ENCODE measurements at regions of chr12 and their contacts with region 1.

Region 1: GRCh38 chr12:121793838-121794533 is 498 bp upstream of the RHOF start:
- DNase-seq: peak; percentile 97
- ATAC-seq: peak; percentile 62
- H3K4me3 Mint-ChIP-seq: peak overlapping the region; percentile 93
- H3K27ac Mint-ChIP-seq: peak overlapping the region; percentile 90
- H3K4me1 Mint-ChIP-seq: peaks cover 53% of the 10 kb centered on the region
- H3K27me3 Mint-ChIP-seq: no peaks in the 10 kb centered on the region

Region 2: GRCh38 chr12:121688966-121689365 is 105.0 kb before region 1 on chr12:
- CTCF ChIA-PET with region 1: interaction called, 61 read pairs
- DNase-seq: no peak
- ATAC-seq: no peak
- H3K4me3 Mint-ChIP-seq: no peak overlapping the region
- H3K27ac Mint-ChIP-seq: no peak overlapping the region
- H3K4me1 Mint-ChIP-seq: peaks cover 14% of the 10 kb centered on the region
- H3K27me3 Mint-ChIP-seq: peaks cover 2% of the 10 kb centered on the region

Region 3: GRCh38 chr12:121712461-121713256 is 81.3 kb before region 1 on chr12 and contains the start of gene TMEM120B:
- CTCF ChIA-PET with region 1: interaction called, 74 read pairs
- DNase-seq: peak; percentile 85
- ATAC-seq: peak; percentile 89
- H3K4me3 Mint-ChIP-seq: peak within 1 kb of the TSS; percentile 99
- H3K27ac Mint-ChIP-seq: peak within 1 kb of the TSS; percentile 96
- H3K4me1 Mint-ChIP-seq: peaks cover 26% of the 10 kb centered on the region
- H3K27me3 Mint-ChIP-seq: no peaks in the 10 kb centered on the region
- total RNA-seq, gene TMEM120B: 8.8 to 11.0 TPM

Region 4: DNA sequence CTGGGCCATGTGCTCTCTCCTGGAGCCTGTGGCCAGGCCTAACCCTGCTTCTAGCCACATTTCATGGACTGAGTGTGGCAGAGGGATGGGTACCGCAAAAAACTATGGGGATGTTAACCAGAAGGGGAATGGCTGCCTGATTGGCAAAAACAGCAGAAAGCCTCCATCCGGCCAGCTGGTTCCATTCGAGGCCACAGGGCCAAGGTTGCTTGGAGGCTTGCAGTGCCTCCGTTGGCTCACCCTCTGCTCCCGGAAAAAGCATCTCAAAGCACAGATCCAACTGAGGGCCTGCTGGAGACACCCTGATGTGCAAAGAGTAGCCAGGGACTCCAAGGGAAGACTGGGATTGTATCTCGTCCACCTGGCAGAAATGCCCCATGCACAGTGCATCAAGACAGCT is 65.0 kb before region 1 on chr12:
- CTCF ChIA-PET with region 1: no interaction called
- DNase-seq: no peak
- ATAC-seq: no peak
- H3K4me3 Mint-ChIP-seq: no peak overlapping the region
- H3K27ac Mint-ChIP-seq: no peak overlapping the region
- H3K4me1 Mint-ChIP-seq: no peaks in the 10 kb centered on the region
- H3K27me3 Mint-ChIP-seq: no peaks in the 10 kb centered on the region

Region 5: DNA sequence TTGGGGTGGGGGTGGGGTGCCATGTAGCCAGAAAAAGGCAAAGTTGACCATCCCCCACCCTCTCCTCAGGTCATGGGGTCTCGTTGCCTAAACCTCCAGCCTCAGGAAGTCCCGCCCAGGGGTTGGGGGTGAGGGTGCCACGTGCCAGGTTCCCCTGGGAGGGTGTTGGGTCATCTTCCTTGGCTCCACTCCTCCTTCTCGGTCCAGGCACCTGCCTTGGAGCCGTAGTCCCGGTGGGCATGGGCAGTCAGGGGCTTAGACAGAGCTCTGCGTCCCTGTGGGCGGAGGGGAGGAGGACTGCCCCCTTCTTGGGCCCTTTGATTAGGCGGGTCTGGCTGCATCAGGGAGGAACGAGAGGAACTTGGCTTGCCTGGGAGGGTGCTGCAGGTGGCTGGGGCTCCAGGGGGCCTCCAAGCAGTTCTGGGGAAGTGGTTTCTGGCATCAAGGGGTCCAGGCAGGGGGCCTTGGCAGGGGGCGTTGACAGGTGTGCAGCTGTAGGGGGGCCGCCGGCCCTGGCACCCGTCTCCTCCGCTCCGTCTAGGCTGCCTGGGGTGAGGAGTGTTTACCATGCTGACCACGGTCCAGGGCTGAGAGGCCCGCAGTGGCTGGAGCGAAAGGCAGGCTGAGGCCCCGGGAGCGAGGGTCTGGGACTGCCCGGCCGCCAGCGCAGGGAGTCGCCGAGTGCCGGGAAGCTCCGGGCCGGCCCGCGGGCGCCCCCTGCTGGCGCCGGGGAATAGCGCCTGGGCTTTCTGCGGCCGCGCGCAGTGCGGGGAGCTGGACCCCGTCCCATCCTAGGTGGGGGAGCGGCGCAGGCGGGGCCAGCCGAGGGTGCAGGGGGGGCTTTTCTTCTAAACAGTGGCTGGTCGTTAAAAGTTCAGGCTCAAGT is 17.7 kb after region 1 on chr12:
- CTCF ChIA-PET with region 1: interaction called, 1,678 read pairs
- DNase-seq: peak; percentile 72
- ATAC-seq: peak; percentile 89
- H3K4me3 Mint-ChIP-seq: peak overlapping the region; percentile 78
- H3K27ac Mint-ChIP-seq: peak overlapping the region; percentile 58
- H3K4me1 Mint-ChIP-seq: peaks cover 46% of the 10 kb centered on the region
- H3K27me3 Mint-ChIP-seq: no peaks in the 10 kb centered on the region

Region 6: DNA sequence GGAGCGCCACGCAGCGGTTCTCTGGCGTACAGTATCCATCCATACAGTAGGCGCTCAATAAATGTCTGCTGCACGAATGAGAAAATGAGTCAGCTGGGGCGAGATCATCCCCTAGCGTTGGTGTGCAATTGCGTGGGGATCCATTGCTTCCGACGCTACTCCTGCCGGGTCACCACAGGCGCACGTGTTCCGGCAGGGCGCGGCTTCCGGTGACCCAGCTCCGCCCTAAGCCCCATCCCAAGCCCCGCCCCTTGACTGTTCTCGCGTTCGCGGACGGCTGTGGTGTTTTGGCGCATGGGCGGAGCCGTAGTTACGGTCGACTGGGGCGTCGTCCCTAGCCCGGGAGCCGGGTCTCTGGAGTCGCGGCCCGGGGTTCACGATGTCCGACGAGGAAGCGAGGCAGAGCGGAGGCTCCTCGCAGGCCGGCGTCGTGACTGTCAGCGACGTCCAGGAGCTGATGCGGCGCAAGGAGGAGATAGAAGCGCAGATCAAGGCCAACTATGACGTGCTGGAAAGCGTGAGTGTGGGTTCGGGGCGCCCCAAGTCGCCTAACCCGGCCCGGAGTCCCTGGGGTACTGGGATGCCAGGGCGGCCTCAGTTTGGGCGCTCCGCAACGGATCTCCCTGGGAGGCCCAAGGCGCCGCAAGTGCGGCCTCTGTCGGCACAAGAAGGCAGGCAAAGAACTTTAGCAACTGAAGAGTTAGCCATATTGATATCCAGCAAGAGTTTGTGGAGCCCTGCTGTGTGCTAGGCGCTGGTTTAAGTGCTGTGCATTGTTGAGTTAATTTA is 94.7 kb after region 1 on chr12 and contains the start of gene PSMD9:
- CTCF ChIA-PET with region 1: interaction called, 130 read pairs
- DNase-seq: peak; percentile 99
- ATAC-seq: peak; percentile 94
- H3K4me3 Mint-ChIP-seq: peak within 1 kb of the TSS; percentile 98
- H3K27ac Mint-ChIP-seq: peak within 1 kb of the TSS; percentile 98
- H3K4me1 Mint-ChIP-seq: peaks cover 40% of the 10 kb centered on the region
- H3K27me3 Mint-ChIP-seq: peaks cover 2% of the 10 kb centered on the region
- total RNA-seq, gene PSMD9: 61.9 to 63.5 TPM

Region 7: DNA sequence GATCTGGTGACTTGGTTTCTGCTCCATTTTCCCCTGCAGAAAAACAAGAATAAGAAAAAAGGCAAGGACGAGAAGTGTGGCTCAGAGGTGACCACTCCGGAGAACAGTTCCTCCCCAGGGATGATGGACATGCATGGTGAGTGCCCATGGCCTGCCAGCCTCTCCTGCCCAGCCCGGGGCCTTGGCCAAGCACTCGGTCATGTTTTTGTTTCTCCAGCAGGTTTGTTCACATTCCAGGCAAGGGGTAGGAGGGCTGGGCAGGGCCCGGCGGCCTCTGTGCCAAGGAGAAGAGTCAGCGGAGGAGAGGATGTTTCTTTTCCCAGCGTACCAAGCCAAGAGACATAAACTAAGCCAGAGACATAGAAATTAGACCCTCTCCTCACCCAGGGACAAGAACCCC is 241.3 kb after region 1 on chr12:
- CTCF ChIA-PET with region 1: no interaction called
- DNase-seq: no peak
- ATAC-seq: no peak
- H3K4me3 Mint-ChIP-seq: no peak overlapping the region
- H3K27ac Mint-ChIP-seq: no peak overlapping the region
- H3K4me1 Mint-ChIP-seq: no peaks in the 10 kb centered on the region
- H3K27me3 Mint-ChIP-seq: peaks cover 18% of the 10 kb centered on the region

Measured in activated CD8-positive, alpha-beta memory T cell treated with anti-CD3 and anti-CD28 coated beads, Interleukin-2, amount 10 ng/mL, durations not matched to agents 7 days and 5 days (primary cell).